WTC11 (cell line): ENCODE measurements at regions of chr5 and their contacts with region 1.

Region 1: DNA sequence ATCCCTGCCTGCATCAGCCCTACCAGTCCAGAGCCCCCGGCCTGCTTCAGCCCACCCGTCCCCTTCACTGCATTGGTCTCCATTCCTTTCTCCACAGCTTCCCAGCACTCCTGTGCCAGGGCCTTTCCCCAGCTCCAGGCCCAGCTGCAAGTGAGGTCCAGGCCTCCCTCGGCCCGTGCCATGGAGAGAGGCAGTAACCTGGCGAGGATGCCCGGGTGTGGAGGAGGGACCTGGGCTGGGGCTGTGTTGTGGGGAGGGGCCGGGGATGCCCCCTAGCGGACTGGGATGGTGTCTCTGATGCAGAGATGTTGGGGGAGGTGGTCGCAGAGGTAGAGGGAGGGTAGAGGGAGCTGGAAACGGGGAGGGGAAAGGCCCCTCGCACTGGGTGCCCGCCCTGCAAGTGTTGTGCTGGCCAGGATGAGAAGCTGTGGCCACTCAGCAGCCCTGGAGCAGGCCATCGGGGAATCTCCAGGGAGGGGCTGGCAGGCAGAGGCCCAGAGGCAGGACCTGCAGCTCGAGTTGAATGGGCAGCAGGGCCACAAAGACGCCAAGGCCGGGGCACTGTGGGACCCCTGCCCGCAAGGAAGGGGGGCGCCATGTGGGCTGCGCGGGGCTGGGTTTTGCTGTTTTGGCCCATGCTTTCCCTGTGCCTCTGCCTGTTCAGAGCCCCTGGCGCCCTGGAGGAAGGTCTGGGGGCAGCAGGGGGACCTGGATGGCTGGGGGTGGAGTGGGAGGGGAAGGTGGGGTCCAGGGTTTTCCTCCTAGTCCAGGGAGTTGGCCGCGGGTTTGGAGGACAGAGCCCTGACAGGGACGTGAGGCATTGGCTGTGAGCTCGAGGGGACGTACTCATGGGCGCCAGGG is 26.0 kb upstream of the NKD2 start:
- DNase-seq: peak; percentile 76
- ATAC-seq: peak; percentile 99
- H3K4me3 Mint-ChIP-seq: no peak overlapping the region
- H3K27ac Mint-ChIP-seq: no peak overlapping the region
- H3K4me1 Mint-ChIP-seq: no peaks in the 10 kb centered on the region
- H3K27me3 Mint-ChIP-seq: peaks cover 6% of the 10 kb centered on the region; the same call in 1 of the 2 replicates
- CTCF ChIP-seq: peak; percentile 63

Region 2: GRCh38 chr5:895414-896120 is 87.0 kb before region 1 on chr5:
- CTCF ChIA-PET with region 1: no interaction called
- POLR2A ChIA-PET with region 1: no interaction called
- DNase-seq: no peak
- ATAC-seq: no peak
- H3K4me3 Mint-ChIP-seq: no peak overlapping the region
- H3K27ac Mint-ChIP-seq: no peak overlapping the region
- H3K4me1 Mint-ChIP-seq: peaks cover 19% of the 10 kb centered on the region
- H3K27me3 Mint-ChIP-seq: no peaks in the 10 kb centered on the region
- CTCF ChIP-seq: no peak

Region 3: DNA sequence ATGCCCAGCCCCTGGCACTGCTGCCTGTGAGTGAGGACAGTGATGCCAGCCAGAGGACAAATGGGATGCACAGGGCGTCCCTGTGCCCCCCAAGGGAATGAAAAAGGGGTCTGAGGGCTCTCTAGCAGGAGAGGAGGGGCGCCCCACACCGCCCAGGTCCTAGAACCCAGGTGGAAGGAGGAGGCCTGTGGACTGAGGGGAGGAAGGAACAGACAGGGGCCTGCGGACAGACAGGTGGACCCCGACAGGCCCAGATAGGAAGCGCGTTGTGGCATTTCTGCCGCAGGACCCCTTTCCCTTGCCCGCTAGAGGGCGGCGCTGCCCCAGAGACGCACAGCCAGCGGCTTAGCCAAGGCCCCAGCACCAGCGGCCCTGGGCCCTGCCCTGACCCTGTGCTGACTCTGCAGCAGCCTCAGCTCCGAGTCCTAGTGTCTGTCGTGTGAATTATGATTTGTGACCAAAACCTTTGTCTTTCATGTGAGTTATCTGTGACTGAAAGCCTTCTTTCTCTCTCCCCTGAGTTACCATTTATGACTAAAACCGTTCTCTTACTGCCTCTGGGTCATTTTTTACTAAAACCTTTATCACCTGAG is 59.2 kb before region 1 on chr5:
- CTCF ChIA-PET with region 1: interaction called, 35 read pairs
- POLR2A ChIA-PET with region 1: no interaction called
- DNase-seq: peak; percentile 90
- ATAC-seq: peak; percentile 89
- H3K4me3 Mint-ChIP-seq: no peak overlapping the region
- H3K27ac Mint-ChIP-seq: no peak overlapping the region
- H3K4me1 Mint-ChIP-seq: peaks cover 5% of the 10 kb centered on the region; the same call in 1 of the 2 replicates
- H3K27me3 Mint-ChIP-seq: peaks cover 26% of the 10 kb centered on the region
- CTCF ChIP-seq: peak; percentile 75

Region 4: GRCh38 chr5:956941-957747 is 25.5 kb before region 1 on chr5:
- CTCF ChIA-PET with region 1: interaction called, 15 read pairs
- POLR2A ChIA-PET with region 1: no interaction called
- DNase-seq: peak; percentile 34
- ATAC-seq: peak; percentile 21
- H3K4me3 Mint-ChIP-seq: no peak overlapping the region
- H3K27ac Mint-ChIP-seq: no peak overlapping the region; the same call in 1 of the 2 replicates
- H3K4me1 Mint-ChIP-seq: no peaks in the 10 kb centered on the region
- H3K27me3 Mint-ChIP-seq: no peaks in the 10 kb centered on the region
- CTCF ChIP-seq: peak; percentile 38; the same call in 1 of the 2 replicates

Region 5: DNA sequence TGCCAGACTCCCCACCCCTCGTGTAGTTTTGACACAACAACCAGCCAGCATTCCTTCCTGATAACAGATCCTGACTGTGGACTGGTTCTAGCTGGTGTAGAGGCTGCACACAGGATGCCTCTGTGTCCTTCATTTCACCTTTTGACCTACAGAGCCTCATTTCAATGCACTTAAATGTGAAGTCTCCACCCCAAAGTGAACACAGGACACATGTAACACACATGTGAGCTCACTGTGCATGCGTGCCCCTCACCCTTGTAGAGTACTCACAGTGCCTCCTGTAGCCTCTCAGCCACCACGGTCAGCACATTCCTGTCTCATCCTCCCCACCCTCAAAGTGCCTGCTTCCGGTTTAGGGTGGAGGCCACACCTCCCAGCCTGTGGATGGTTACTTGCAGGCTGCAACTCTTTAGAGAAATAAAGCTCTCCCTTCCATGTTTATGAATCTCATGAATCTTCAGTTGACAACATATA is 14.4 kb after region 1 on chr5:
- CTCF ChIA-PET with region 1: interaction called, 13 read pairs
- POLR2A ChIA-PET with region 1: no interaction called
- DNase-seq: peak; percentile 13
- ATAC-seq: peak; percentile 77
- H3K4me3 Mint-ChIP-seq: no peak overlapping the region
- H3K27ac Mint-ChIP-seq: no peak overlapping the region
- H3K4me1 Mint-ChIP-seq: peaks cover 6% of the 10 kb centered on the region; the same call in 1 of the 2 replicates
- H3K27me3 Mint-ChIP-seq: no peaks in the 10 kb centered on the region; the same call in 1 of the 2 replicates
- CTCF ChIP-seq: no peak

Region 6: GRCh38 chr5:1011226-1011631 is 28.6 kb after region 1 on chr5:
- CTCF ChIA-PET with region 1: interaction called, 26 read pairs
- POLR2A ChIA-PET with region 1: no interaction called
- DNase-seq: peak; percentile 87
- ATAC-seq: peak; percentile 80
- H3K4me3 Mint-ChIP-seq: no peak overlapping the region
- H3K27ac Mint-ChIP-seq: no peak overlapping the region
- H3K4me1 Mint-ChIP-seq: peaks cover 30% of the 10 kb centered on the region
- H3K27me3 Mint-ChIP-seq: peaks cover 37% of the 10 kb centered on the region
- CTCF ChIP-seq: peak; percentile 61

Region 7: DNA sequence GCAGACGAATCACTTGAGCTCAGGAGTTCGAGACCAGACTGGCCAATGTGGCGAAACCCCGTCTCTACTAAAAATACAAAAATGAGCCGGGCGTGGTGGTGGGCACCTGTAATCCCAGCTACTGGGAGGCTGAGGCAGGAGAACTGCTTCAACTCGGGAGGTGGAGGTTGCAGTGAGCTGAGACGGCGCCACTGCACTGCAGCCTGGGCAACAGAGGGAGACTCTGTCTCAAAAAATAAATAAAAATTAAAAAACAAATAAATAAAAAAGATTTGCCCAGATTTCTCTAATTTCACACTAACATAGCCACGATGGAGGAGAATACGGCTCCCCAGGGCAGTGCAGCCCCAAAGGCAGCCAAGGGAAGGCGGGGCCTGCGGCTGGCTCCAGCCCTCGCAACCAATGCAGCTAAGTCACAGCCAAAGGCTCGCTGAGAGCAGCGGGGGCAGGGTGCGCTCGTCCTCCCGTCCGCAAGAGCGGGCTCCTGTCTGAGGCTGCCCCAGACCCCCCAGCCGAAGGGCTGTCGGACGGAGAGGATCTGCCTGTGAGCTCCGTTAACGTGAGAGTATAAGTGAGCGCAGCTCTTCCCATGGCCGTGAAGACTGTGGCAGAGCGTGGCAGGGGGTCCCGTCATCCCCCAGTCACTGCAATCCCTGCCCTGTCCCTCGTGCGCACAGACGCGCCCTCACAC is 85.7 kb after region 1 on chr5:
- CTCF ChIA-PET with region 1: no interaction called
- POLR2A ChIA-PET with region 1: no interaction called
- DNase-seq: no peak
- ATAC-seq: no peak
- H3K4me3 Mint-ChIP-seq: no peak overlapping the region
- H3K27ac Mint-ChIP-seq: no peak overlapping the region; the same call in 1 of the 2 replicates
- H3K4me1 Mint-ChIP-seq: no peaks in the 10 kb centered on the region
- H3K27me3 Mint-ChIP-seq: no peaks in the 10 kb centered on the region
- CTCF ChIP-seq: no peak

Region 8: GRCh38 chr5:1351156-1351555 is 368.5 kb after region 1 on chr5:
- CTCF ChIA-PET with region 1: no interaction called
- POLR2A ChIA-PET with region 1: no interaction called
- DNase-seq: no peak
- ATAC-seq: no peak
- H3K4me3 Mint-ChIP-seq: no peak overlapping the region
- H3K27ac Mint-ChIP-seq: no peak overlapping the region
- H3K4me1 Mint-ChIP-seq: peaks cover 13% of the 10 kb centered on the region
- H3K27me3 Mint-ChIP-seq: no peaks in the 10 kb centered on the region
- CTCF ChIP-seq: no peak